ENCODE measurements at regions of chr11 and their contacts with region 1.

Region 1: GRCh38 chr11:62841361-62842184 is 2.2 kb upstream of the WDR74 start:
- DNase-seq: peak; percentile 100
- H3K4me3 ChIP-seq: peak overlapping the region; percentile 34
- H3K27me3 ChIP-seq: no peaks in the 10 kb centered on the region
- CTCF ChIP-seq: no peak

Region 2: DNA sequence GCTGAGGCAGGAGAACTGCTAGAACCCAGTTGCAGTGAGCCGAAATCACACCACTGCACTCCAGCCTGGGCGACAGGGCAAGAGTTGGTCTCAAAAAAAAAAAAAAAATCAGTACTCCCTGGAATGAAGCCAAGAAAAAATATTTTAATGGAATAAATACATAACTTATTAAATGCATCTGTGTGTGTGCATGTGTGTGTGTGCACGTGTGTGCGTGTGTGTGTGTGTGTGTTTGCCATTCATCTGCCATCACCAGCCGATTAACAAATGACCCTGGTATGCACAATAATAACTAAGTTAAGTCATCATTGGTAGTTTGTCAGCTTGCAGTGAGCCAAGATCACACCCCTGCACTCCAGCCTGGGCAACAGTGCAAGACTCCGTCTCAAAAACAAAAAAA is 457.8 kb before region 1 on chr11:
- CTCF ChIA-PET with region 1: no interaction called
- POLR2A ChIA-PET with region 1: no interaction called
- DNase-seq: no peak
- H3K4me3 ChIP-seq: no peak overlapping the region
- H3K27me3 ChIP-seq: peaks cover 2% of the 10 kb centered on the region; the same call in 1 of the 2 replicates
- CTCF ChIP-seq: no peak

Region 3: GRCh38 chr11:62612366-62613290 is 228.9 kb before region 1 on chr11 and contains the starts of genes EML3 and ROM1:
- CTCF ChIA-PET with region 1: no interaction called
- POLR2A ChIA-PET with region 1: no interaction called
- DNase-seq: no peak
- H3K4me3 ChIP-seq: peak within 1 kb of the TSS; percentile 65
- H3K27me3 ChIP-seq: no peaks in the 10 kb centered on the region
- CTCF ChIP-seq: peak; percentile 70
- polyA plus RNA-seq, gene EML3: 18.9 and 26.5 TPM in 2 replicates
- polyA plus RNA-seq, gene ROM1: 2.1 and 2.2 TPM in 2 replicates

Region 4: GRCh38 chr11:62753736-62754603 is 87.6 kb before region 1 on chr11 and contains the start of gene ZBTB3:
- CTCF ChIA-PET with region 1: no interaction called
- POLR2A ChIA-PET with region 1: interaction called, 14 read pairs
- DNase-seq: peak; percentile 98
- H3K4me3 ChIP-seq: peak within 1 kb of the TSS; percentile 75
- H3K27me3 ChIP-seq: no peaks in the 10 kb centered on the region
- CTCF ChIP-seq: no peak
- polyA plus RNA-seq, gene ZBTB3: 3.5 and 3.8 TPM in 2 replicates

Region 5: GRCh38 chr11:62811659-62812058 is 29.9 kb before region 1 on chr11:
- CTCF ChIA-PET with region 1: interaction called, 3 read pairs
- POLR2A ChIA-PET with region 1: interaction called, 10 read pairs
- DNase-seq: no peak
- H3K4me3 ChIP-seq: no peak overlapping the region
- H3K27me3 ChIP-seq: no peaks in the 10 kb centered on the region
- CTCF ChIP-seq: no peak

Region 6: GRCh38 chr11:62855571-62856332 is 14.2 kb after region 1 on chr11:
- CTCF ChIA-PET with region 1: interaction called, 6 read pairs
- POLR2A ChIA-PET with region 1: interaction called, 23 read pairs
- DNase-seq: peak; percentile 86
- H3K4me3 ChIP-seq: peak overlapping the region; percentile 67
- H3K27me3 ChIP-seq: no peaks in the 10 kb centered on the region
- CTCF ChIP-seq: no peak

Measured in BJ (cell line).